B cell (primary cell): ENCODE measurements at regions of chr10 and their contacts with region 1.

Region 1: DNA sequence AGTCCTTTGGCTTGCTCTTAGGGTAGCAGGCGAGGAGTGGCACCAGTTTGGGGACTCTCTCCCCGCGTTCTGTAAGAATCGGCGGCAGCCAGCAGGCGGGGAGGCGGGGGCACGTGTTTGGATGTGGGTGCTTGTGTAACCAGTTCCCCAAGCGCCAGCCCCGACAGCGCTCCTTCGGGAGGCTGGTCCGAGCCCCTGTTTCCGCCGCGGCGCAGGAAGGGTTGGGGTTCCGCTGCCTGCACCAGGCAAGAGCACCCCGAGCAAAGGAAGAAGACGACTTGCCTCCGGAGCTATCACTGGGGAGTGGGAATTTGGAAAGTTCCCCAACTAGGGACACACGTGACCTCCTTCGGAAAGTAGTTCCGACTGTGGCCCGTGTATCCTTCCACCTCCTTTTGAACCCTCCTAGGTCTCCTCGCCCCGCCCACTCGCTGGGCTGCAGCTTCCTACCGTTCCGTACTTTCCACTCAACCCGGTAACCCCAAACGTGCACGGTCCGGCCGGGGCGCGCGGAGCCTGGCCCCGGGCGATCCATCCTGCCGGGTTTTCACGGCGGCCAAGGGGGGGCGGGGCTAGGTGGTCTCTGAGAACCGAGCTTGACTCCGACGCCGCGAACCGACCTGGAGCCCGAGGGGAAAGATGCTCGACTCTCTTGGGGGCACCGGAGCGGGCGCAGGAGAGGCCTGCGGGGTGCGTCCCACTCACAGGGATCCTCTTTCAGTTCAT is 1.2 kb downstream of the KLLN start:
- DNase-seq: peak; percentile 98
- ATAC-seq: peak; percentile 66
- H3K4me3 ChIP-seq: peak overlapping the region; percentile 87 to 99 (median 99)
- H3K4me3 Mint-ChIP-seq: peak overlapping the region; percentile 98
- H3K27ac ChIP-seq: peak overlapping the region; percentile 79 to 84
- H3K27ac Mint-ChIP-seq: peak overlapping the region; percentile 98
- H3K4me1 ChIP-seq: peaks cover 16 to 20% of the 10 kb centered on the region in 2 donors
- H3K4me1 Mint-ChIP-seq: peaks cover 35% of the 10 kb centered on the region
- H3K27me3 ChIP-seq: no peaks in the 10 kb centered on the region
- H3K27me3 Mint-ChIP-seq: no peaks in the 10 kb centered on the region
- CTCF ChIP-seq: no peak

Region 2: DNA sequence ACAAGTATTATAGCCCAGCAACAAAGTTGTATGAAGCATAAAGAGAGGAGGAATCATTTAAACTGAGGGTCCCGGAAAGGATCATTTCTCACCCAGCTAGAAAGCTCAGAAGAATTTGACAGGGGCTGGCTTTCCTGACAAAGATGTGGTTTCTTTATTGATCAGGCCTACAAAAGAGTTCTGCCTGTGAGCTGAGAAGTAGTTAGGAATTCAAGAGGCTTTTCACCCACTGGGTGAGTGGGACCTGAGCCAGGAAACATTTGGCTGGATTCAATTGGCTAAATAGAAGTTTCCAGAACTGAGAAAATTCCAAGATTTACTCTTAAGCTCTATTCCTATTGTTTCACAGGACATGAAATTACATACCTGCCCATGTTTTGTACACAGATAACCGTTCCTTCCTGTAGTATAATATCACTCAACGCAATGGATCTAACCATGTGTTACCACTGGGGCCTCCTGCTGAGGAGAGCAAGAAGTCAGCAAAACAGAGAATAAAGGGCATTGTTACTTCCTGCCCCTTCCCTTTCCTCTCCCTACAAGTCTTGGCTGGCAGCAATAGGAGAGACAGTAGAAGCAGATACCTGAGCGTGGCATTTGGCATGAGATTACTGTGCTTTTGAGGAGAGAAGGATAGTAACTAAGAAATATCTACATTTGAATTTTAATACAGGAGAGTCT is 256.3 kb before region 1 on chr10:
- CTCF ChIA-PET with region 1: no interaction called
- POLR2A ChIA-PET with region 1: no interaction called
- intact Hi-C with region 1: no loop called
- DNase-seq: no peak
- ATAC-seq: no peak
- H3K4me3 ChIP-seq: no peak overlapping the region
- H3K4me3 Mint-ChIP-seq: no peak overlapping the region
- H3K27ac ChIP-seq: no peak overlapping the region
- H3K27ac Mint-ChIP-seq: no peak overlapping the region
- H3K4me1 ChIP-seq: no peaks in the 10 kb centered on the region
- H3K4me1 Mint-ChIP-seq: peaks cover 4% of the 10 kb centered on the region
- H3K27me3 ChIP-seq: no peaks in the 10 kb centered on the region
- H3K27me3 Mint-ChIP-seq: no peaks in the 10 kb centered on the region
- CTCF ChIP-seq: no peak

Region 3: GRCh38 chr10:87761892-87762291 is 100.2 kb before region 1 on chr10:
- CTCF ChIA-PET with region 1: no interaction called
- POLR2A ChIA-PET with region 1: no interaction called
- intact Hi-C with region 1: no loop called
- DNase-seq: no peak
- ATAC-seq: no peak
- H3K4me3 ChIP-seq: no peak overlapping the region
- H3K4me3 Mint-ChIP-seq: no peak overlapping the region
- H3K27ac ChIP-seq: no peak overlapping the region
- H3K27ac Mint-ChIP-seq: no peak overlapping the region
- H3K4me1 ChIP-seq: no peaks in the 10 kb centered on the region
- H3K4me1 Mint-ChIP-seq: peaks cover 3% of the 10 kb centered on the region
- H3K27me3 ChIP-seq: no peaks in the 10 kb centered on the region
- H3K27me3 Mint-ChIP-seq: no peaks in the 10 kb centered on the region
- CTCF ChIP-seq: no peak

Region 4: GRCh38 chr10:87817609-87818504 is 44.3 kb before region 1 on chr10 and contains the start of gene ATAD1:
- CTCF ChIA-PET with region 1: interaction called, 12 read pairs
- POLR2A ChIA-PET with region 1: interaction called, 27 read pairs
- intact Hi-C with region 1: loop called (anchors 1 kb)
- DNase-seq: peak; percentile 93
- ATAC-seq: peak; percentile 81
- H3K4me3 ChIP-seq: peak within 1 kb of the TSS; percentile 84 to 93 (median 87)
- H3K4me3 Mint-ChIP-seq: peak within 1 kb of the TSS; percentile 96
- H3K27ac ChIP-seq: peak within 1 kb of the TSS; percentile 91 to 95
- H3K27ac Mint-ChIP-seq: peak within 1 kb of the TSS; percentile 97
- H3K4me1 ChIP-seq: peaks cover 15 to 25% of the 10 kb centered on the region in 2 donors
- H3K4me1 Mint-ChIP-seq: peaks cover 37% of the 10 kb centered on the region
- H3K27me3 ChIP-seq: no peaks in the 10 kb centered on the region
- H3K27me3 Mint-ChIP-seq: no peaks in the 10 kb centered on the region
- CTCF ChIP-seq: peak; percentile 16
- total RNA-seq, gene ATAD1: 41.5 and 44.9 TPM in 2 replicates

Region 5: DNA sequence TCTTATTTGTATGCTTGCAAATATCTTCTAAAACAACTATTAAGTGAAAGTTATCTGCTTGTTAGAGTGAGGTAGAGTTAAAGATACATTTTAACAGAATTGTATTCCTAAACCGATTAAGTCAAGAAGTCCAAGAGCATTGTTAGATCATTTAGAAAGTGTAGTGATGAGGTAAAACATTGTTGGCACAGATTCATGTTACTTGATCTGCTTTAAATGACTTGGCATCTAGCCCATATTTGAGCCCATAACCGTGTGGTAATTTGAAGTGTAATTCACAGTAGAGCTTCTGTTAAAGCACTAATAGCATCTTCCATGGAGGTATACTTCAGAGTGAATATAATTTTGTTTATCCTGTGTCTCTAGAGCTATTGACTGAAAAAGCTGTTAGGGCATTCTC is 63.5 kb after region 1 on chr10:
- CTCF ChIA-PET with region 1: interaction called, 4 read pairs
- POLR2A ChIA-PET with region 1: interaction called, 5 read pairs
- intact Hi-C with region 1: loop called (anchors 5 kb)
- DNase-seq: no peak
- ATAC-seq: no peak
- H3K4me3 ChIP-seq: no peak overlapping the region
- H3K4me3 Mint-ChIP-seq: no peak overlapping the region
- H3K27ac ChIP-seq: peak overlapping the region in 1 of 2 donors; percentile 34
- H3K27ac Mint-ChIP-seq: peak overlapping the region; percentile 37
- H3K4me1 ChIP-seq: peaks cover 22 to 79% of the 10 kb centered on the region in 2 donors
- H3K4me1 Mint-ChIP-seq: peaks cover 81% of the 10 kb centered on the region
- H3K27me3 ChIP-seq: no peaks in the 10 kb centered on the region
- H3K27me3 Mint-ChIP-seq: no peaks in the 10 kb centered on the region
- CTCF ChIP-seq: no peak

Region 6: GRCh38 chr10:88216976-88217375 is 354.9 kb after region 1 on chr10:
- CTCF ChIA-PET with region 1: no interaction called
- POLR2A ChIA-PET with region 1: no interaction called
- intact Hi-C with region 1: loop called (anchors 2 kb)
- DNase-seq: peak; percentile 58
- ATAC-seq: peak; percentile 69
- H3K4me3 ChIP-seq: peak overlapping the region in 1 of 5 experiments; percentile 18
- H3K4me3 Mint-ChIP-seq: peak overlapping the region; percentile 4
- H3K27ac ChIP-seq: no peak overlapping the region
- H3K27ac Mint-ChIP-seq: peak overlapping the region; percentile 71
- H3K4me1 ChIP-seq: peaks cover 11 to 12% of the 10 kb centered on the region in 2 donors
- H3K4me1 Mint-ChIP-seq: peaks cover 19% of the 10 kb centered on the region
- H3K27me3 ChIP-seq: no peaks in the 10 kb centered on the region
- H3K27me3 Mint-ChIP-seq: no peaks in the 10 kb centered on the region
- CTCF ChIP-seq: no peak

Region 7: DNA sequence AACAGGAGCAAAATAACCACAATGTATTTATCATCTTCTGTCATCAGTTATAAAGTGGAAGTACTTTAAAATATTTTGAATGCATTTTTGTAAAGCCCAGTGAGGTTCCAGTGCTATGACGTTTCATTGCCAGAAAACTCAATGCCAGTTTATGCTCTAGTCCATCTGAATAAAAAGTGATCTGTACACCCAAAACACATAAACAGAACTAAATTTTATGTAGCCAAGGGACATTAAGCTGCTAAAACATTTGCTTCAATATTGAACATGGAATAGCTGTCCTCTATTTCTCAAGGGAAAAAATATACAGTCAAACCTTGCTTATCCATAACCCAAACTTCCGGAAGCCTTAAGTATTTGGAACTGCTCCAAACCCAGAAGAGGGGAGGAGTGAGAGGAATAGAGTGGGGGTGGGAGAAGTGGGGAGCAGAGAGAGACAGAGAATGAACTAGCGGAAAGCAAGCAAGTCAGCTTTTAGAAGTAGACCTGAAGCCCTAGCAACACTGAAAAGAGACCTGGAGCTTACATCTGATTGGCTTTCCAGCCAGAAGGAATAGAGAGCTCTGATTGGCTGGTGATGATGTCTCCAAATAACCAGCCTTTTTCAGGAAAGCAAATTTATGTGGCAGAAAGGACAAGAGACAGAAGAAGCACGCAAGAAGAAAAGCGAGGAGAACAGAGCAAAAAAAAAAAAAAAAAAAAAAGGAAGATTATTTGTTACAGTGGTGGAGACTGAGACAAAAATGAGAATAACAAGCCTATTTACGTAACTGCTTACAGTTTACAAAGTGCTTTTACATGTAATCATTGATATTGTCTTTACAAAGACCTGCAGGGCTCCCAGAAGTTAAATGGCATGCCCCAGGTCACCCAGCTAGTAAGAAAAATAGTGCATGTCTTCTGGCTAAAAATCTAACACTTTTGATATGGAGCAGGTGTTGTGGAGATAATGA is 525.0 kb after region 1 on chr10:
- CTCF ChIA-PET with region 1: interaction called, 241 read pairs
- POLR2A ChIA-PET with region 1: interaction called, 77 read pairs
- intact Hi-C with region 1: loop called (anchors 1 kb)
- DNase-seq: peak; percentile 69
- ATAC-seq: peak; percentile 44
- H3K4me3 ChIP-seq: peak overlapping the region in 4 of 5 experiments; percentile 10 to 59 (median 38)
- H3K4me3 Mint-ChIP-seq: no peak overlapping the region
- H3K27ac ChIP-seq: peak overlapping the region; percentile 97 to 99
- H3K27ac Mint-ChIP-seq: no peak overlapping the region
- H3K4me1 ChIP-seq: peaks cover 70 to 77% of the 10 kb centered on the region in 2 donors
- H3K4me1 Mint-ChIP-seq: peaks cover 32% of the 10 kb centered on the region
- H3K27me3 ChIP-seq: no peaks in the 10 kb centered on the region
- H3K27me3 Mint-ChIP-seq: no peaks in the 10 kb centered on the region
- CTCF ChIP-seq: no peak

Region 8: DNA sequence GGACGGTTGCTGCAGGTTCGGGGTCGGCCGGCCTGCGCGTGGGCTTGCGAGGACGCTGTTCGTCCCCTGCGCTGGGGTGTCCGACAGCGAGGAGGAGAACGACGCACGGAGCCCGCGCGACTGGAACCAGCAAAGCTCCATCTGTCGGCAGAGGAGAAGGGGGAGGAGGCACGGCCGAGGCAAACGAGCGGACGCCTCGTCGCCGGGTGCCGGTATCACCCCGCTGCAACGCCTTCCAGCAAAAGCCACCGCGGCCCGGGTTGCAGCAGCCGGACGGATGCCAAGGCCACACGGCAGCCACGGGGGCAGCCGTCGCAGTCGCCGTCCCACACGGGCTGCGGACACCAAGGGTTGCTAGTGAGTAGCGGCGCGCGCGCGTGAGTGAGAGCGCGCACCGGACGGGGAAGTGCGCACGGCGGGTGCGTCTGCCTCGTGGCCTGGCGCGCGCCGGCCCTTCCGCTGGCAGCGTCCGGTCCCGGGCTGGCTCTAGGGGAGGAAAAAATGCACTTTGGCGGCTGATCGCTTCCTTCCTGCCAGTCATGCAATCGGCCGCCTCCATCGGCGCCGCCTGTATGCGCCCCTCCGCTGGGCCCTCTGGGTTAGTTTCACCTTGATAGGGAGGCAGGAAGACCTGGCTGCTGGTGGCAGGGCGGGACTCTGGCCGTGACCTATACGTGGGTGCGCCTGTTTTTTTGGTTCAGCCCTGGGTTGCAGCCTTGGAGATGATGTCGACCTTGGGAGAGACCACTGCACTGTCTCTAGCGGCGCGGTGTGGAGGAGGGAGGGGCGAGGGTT is 1018.4 kb after region 1 on chr10:
- CTCF ChIA-PET with region 1: no interaction called
- POLR2A ChIA-PET with region 1: interaction called, 3 read pairs
- intact Hi-C with region 1: loop called (anchors 2 kb)
- DNase-seq: peak; percentile 92
- ATAC-seq: peak; percentile 68
- H3K4me3 ChIP-seq: peak overlapping the region; percentile 50 to 84 (median 71)
- H3K4me3 Mint-ChIP-seq: peak overlapping the region; percentile 96
- H3K27ac ChIP-seq: peak overlapping the region; percentile 88 to 91
- H3K27ac Mint-ChIP-seq: peak overlapping the region; percentile 97
- H3K4me1 ChIP-seq: peaks cover 25 to 40% of the 10 kb centered on the region in 2 donors
- H3K4me1 Mint-ChIP-seq: peaks cover 57% of the 10 kb centered on the region
- H3K27me3 ChIP-seq: no peaks in the 10 kb centered on the region
- H3K27me3 Mint-ChIP-seq: no peaks in the 10 kb centered on the region
- CTCF ChIP-seq: peak; percentile 30